ENCODE measurements at regions of chr12 and their contacts with region 1.

Region 1: DNA sequence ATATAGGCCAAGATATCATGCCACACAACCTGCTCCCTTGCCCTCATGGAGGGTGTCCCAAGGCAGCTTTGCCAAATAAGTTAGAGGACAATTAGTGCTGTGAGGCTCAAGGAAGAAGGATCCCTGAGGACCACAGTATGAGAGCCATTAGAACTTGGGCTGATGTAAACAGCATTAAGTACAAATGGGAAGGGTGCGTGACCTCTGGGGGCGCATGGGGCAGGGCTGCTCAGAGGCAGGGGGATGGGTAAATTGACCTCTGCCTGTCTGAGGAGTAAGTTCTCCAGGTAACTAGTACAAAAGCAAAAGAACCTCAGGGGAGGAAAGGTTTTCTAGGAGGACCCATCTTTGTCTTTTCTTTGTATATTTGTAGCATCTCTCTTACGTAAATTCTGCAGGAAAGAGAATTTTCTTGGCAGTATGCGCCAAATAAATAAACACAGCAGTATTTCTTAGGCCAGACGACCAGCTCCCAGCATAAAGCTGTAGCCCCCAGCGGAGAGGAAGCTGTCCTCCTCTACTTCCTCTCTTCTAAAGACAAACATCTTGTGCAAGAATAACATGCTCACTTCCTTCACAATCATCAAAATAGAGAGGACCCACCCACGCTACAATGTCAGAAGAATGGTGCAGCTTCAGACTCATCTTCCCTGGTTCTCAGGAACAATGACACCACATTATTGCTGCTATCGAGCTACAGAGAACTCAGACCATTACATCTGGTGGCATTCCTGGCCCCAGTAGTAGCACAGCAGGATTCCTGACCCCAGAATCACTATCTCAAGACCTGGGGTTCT is 16.4 kb upstream of the VWF start:
- DNase-seq: peak in 2 of 3 donors; percentile 78 to 86
- H3K4me3 ChIP-seq: peak overlapping the region in 3 of 7 experiments; percentile 11 to 19 (median 17)
- H3K27ac ChIP-seq: peak overlapping the region; percentile 17 to 60
- H3K4me1 ChIP-seq: peaks cover 21 to 64% (median 57%) of the 10 kb centered on the region in 4 experiments
- H3K27me3 ChIP-seq: no peaks in the 10 kb centered on the region

Region 2: GRCh38 chr12:6125310-6125608 is 15.6 kb before region 1 on chr12:
- CTCF ChIA-PET with region 1: interaction called, 12 read pairs
- POLR2A ChIA-PET with region 1: no interaction called
- DNase-seq: no peak
- H3K4me3 ChIP-seq: no peak overlapping the region
- H3K27ac ChIP-seq: no peak overlapping the region
- H3K4me1 ChIP-seq: peaks cover 4 to 25% (median 22%) of the 10 kb centered on the region in 4 experiments
- H3K27me3 ChIP-seq: no peaks in the 10 kb centered on the region

Region 3: DNA sequence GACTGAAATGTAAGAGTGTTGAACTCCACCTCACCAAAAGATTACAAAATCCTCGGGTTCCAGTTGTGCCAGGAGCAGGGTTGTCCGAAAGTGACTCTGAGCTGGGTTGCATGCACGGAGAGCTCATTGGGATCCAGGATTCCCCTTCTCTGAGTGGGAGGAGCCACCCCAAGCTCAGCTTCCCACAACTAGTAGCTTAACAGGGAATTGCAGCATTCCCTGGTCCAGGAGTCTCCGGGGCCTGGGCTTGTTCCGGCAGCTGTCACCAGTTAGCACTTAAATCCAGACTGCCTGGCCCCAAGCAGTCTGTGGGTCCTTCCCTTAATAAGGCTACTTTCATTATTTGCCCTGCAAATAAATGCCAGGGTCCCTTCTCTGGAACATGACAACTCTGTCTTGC is 109.5 kb after region 1 on chr12:
- CTCF ChIA-PET with region 1: no interaction called
- POLR2A ChIA-PET with region 1: no interaction called
- DNase-seq: no peak
- H3K4me3 ChIP-seq: no peak overlapping the region
- H3K27ac ChIP-seq: no peak overlapping the region
- H3K4me1 ChIP-seq: no peaks in the 10 kb centered on the region
- H3K27me3 ChIP-seq: peaks cover 0 to 4% (median 0%) of the 10 kb centered on the region in 5 experiments

Measured in common myeloid progenitor, CD34-positive (primary cell).